ENCODE measurements at regions of chr1 and their contacts with region 1.

Region 1: GRCh38 chr1:178532392-178532791 is 19.5 kb downstream of the TEX35 start:
- DNase-seq: peak; percentile 76
- H3K4me3 Mint-ChIP-seq: no peak overlapping the region
- H3K27ac Mint-ChIP-seq: no peak overlapping the region
- H3K4me1 Mint-ChIP-seq: no peaks in the 10 kb centered on the region
- H3K27me3 Mint-ChIP-seq: no peaks in the 10 kb centered on the region

Region 2: GRCh38 chr1:178397678-178398077 is 134.7 kb before region 1 on chr1:
- CTCF ChIA-PET with region 1: no interaction called
- POLR2A ChIA-PET with region 1: no interaction called
- DNase-seq: no peak
- H3K4me3 Mint-ChIP-seq: no peak overlapping the region
- H3K27ac Mint-ChIP-seq: no peak overlapping the region
- H3K4me1 Mint-ChIP-seq: no peaks in the 10 kb centered on the region
- H3K27me3 Mint-ChIP-seq: no peaks in the 10 kb centered on the region

Region 3: DNA sequence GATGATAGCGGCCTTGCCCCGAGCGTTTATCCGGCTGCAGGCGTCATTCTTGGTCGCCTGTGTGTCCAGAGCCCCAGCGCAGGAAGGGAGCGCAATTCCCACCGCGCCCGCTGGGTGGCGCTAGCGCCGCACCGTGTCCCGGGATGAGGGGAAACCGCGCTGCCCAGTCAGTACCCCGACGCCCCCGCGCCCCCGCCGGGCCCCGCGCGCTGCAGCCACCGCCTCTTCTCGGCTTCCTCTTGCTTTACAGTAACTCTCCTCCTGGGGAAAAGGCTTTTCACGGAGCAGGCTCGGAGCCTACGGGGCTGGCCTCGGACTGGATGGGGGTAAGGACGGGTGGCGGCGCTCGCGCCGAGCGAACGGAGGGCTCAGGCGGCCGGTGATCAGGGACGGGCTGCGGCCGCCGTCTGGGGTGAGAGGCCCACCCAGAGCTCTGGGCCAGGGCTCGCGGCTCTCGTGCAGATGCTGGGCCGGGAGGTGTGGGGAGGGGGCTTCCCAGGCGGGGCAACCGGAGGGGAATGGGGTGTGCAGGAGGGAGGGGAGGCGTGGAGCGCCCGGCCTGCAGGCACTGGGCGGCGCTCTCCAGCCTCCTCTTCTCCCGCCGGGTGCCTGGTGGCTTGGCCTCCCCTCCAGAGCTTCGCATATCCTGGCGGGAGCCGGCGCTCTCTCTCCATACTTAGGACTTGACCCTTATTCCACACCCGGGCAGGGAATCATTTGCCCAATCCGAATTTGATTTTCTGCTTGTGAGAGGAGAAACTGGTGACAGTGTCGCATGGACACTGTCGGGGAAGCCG is 10.4 kb after region 1 on chr1:
- CTCF ChIA-PET with region 1: interaction called, 19 read pairs
- POLR2A ChIA-PET with region 1: no interaction called
- DNase-seq: peak; percentile 87
- H3K4me3 Mint-ChIP-seq: peak overlapping the region; percentile 86
- H3K27ac Mint-ChIP-seq: peak overlapping the region; percentile 81
- H3K4me1 Mint-ChIP-seq: peaks cover 16% of the 10 kb centered on the region
- H3K27me3 Mint-ChIP-seq: no peaks in the 10 kb centered on the region

Region 4: GRCh38 chr1:178752891-178753290 is 220.5 kb after region 1 on chr1:
- CTCF ChIA-PET with region 1: interaction called, 15 read pairs
- POLR2A ChIA-PET with region 1: no interaction called
- DNase-seq: no peak
- H3K4me3 Mint-ChIP-seq: no peak overlapping the region
- H3K27ac Mint-ChIP-seq: no peak overlapping the region
- H3K4me1 Mint-ChIP-seq: no peaks in the 10 kb centered on the region
- H3K27me3 Mint-ChIP-seq: no peaks in the 10 kb centered on the region